Activated CD4-positive, alpha-beta memory T cell treated with anti-CD3 and anti-CD28 coated beads for 36 hours (primary cell): ENCODE measurements at regions of chr2 and their contacts with region 1.

Region 1: GRCh38 chr2:234257856-234258561 is 207.5 kb downstream of the SPP2 start:
- DNase-seq: peak; percentile 62
- H3K4me3 Mint-ChIP-seq: no peak overlapping the region
- H3K27ac Mint-ChIP-seq: no peak overlapping the region
- H3K4me1 Mint-ChIP-seq: peaks cover 19% of the 10 kb centered on the region
- H3K27me3 Mint-ChIP-seq: no peaks in the 10 kb centered on the region

Region 2: DNA sequence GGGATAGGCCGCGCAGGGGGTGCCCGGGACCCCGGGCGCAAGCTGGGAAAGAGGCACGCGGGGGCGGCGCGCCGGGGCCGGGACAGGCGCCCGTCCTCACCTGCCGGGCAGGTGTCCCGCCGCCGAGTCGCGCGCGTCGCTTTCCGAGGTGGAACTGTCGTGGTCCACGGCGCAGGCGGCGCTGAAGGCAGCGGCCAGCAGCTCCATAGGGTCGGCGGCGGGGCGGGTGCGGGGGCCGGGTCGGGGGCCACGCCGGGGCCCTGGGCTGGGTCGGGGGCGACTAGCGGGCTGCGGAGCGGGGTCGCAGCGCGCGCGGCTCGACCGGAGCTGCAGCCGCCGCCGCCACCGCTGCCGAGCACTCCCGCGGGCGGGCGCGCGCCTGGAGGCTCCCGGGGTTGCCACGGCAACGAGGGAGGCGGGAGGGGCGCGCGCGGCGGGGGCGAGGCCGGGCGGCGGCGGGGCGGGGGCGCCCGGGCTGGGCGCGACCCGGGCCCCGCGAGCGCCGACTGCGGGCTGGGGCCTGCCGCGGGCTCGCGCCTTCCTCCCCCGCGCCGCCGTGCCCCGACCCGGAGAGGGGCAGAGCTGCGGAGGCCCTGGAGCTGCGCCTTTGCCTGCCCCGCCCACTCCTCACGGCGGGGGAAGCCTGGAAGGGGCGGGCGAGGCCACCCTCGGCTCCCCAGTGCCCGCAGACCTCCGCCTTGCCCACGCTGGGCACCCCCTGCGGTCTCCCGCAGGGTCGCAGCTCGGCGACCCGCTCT is 1330.0 kb before region 1 on chr2:
- CTCF ChIA-PET with region 1: no interaction called
- POLR2A ChIA-PET with region 1: no interaction called
- intact Hi-C with region 1: no loop called
- DNase-seq: no peak
- H3K4me3 Mint-ChIP-seq: no peak overlapping the region
- H3K27ac Mint-ChIP-seq: no peak overlapping the region
- H3K4me1 Mint-ChIP-seq: peaks cover 8% of the 10 kb centered on the region
- H3K27me3 Mint-ChIP-seq: peaks cover 56% of the 10 kb centered on the region

Region 3: GRCh38 chr2:234272069-234272850 is 14.3 kb after region 1 on chr2:
- CTCF ChIA-PET with region 1: interaction called, 7 read pairs
- POLR2A ChIA-PET with region 1: interaction called, 3 read pairs
- intact Hi-C with region 1: loop called (anchors 1 kb)
- DNase-seq: no peak
- H3K4me3 Mint-ChIP-seq: no peak overlapping the region
- H3K27ac Mint-ChIP-seq: peak overlapping the region; percentile 55
- H3K4me1 Mint-ChIP-seq: peaks cover 41% of the 10 kb centered on the region
- H3K27me3 Mint-ChIP-seq: no peaks in the 10 kb centered on the region

Region 4: GRCh38 chr2:234670052-234670451 is 412.0 kb after region 1 on chr2:
- CTCF ChIA-PET with region 1: no interaction called
- POLR2A ChIA-PET with region 1: no interaction called
- intact Hi-C with region 1: no loop called
- DNase-seq: no peak
- H3K4me3 Mint-ChIP-seq: no peak overlapping the region
- H3K27ac Mint-ChIP-seq: no peak overlapping the region
- H3K4me1 Mint-ChIP-seq: no peaks in the 10 kb centered on the region
- H3K27me3 Mint-ChIP-seq: peaks cover 23% of the 10 kb centered on the region